HEK293 (cell line): ENCODE measurements at regions of chr17 and their contacts with region 1.

Region 1: DNA sequence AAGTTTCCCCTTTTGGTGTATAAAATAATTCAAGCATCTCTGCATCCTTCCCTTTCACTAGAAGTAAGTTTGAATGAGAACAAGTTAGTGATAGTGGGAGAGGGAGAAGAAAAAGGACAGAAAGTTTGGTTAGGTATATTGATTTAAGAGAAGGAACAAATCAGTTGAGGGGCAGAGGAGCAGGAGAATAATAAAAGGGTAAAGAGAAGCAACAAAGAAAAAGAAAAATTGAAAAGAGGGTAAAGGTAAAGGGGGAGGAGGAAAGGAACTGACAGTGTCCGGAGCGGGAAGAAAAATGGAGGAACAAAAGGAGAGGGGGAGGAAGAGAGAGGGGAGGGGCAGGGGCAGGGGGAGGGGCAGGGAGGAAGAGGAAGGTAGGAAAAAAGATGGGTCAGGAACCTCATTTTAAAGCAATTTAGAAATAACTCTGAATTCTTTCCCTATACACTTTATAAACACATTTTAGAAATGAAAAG is 6.3 kb upstream of the IGF2BP1 start:
- H3K4me3 ChIP-seq: peak overlapping the region; percentile 15
- H3K27ac ChIP-seq: no peak overlapping the region
- H3K4me1 ChIP-seq: peaks cover 35% of the 10 kb centered on the region
- CTCF ChIP-seq: no peak

Region 2: DNA sequence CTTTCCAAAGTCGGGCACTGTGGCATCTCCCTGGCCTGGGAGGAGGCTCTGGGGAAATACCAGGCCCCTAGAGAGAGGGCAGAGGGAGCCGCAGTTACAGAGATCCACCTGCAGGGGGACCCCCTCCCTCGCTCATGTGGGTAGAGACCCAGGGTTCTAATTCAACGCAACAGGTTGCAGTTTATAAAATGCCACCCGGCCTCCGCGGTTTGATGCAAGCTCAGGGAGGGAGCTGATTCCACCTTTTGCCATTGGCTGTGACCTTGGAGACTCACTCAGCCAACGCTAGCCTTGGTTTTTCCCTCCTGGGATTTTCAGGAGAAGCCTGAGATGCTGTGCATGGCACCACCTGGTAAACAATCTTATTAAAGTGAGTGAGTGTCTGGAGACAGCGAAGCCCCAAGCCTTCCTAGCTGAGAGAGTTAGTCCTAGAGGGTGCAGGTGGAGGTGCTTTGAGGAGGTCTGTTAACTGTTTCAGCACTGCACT is 186.0 kb before region 1 on chr17:
- CTCF ChIA-PET with region 1: no interaction called
- POLR2A ChIA-PET with region 1: no interaction called
- H3K4me3 ChIP-seq: no peak overlapping the region
- H3K27ac ChIP-seq: no peak overlapping the region
- H3K4me1 ChIP-seq: peaks cover 4% of the 10 kb centered on the region
- CTCF ChIP-seq: peak; percentile 76

Region 3: GRCh38 chr17:48944519-48945260 is 46.2 kb before region 1 on chr17 and contains the start of gene SNF8:
- CTCF ChIA-PET with region 1: interaction called, 3 read pairs
- POLR2A ChIA-PET with region 1: interaction called, 46 read pairs
- H3K4me3 ChIP-seq: peak within 1 kb of the TSS; percentile 69
- H3K27ac ChIP-seq: peak within 1 kb of the TSS; percentile 76
- H3K4me1 ChIP-seq: 0 out of 2 replicates have a peak, but pooled peaks cover 3% of the 10 kb centered on the region
- CTCF ChIP-seq: 0 out of 2 replicates have a peak, but pooled peaks have one; percentile 15